ENCODE measurements at regions of chr4 and their contacts with region 1.

Region 1: GRCh38 chr4:52869196-52869595 is 7.1 kb downstream of the RASL11B start:
- DNase-seq: peak; percentile 80
- ATAC-seq: peak; percentile 43

Region 2: GRCh38 chr4:52712172-52712990 is 156.8 kb before region 1 on chr4:
- intact Hi-C with region 1: loop called (anchors 5 kb)
- DNase-seq: peak; percentile 98
- ATAC-seq: peak; percentile 99

Region 3: GRCh38 chr4:52750819-52751486 is 118.2 kb before region 1 on chr4 and contains the start of gene ERVMER34-1:
- intact Hi-C with region 1: loop called (anchors 2 kb)
- DNase-seq: peak; percentile 75
- ATAC-seq: peak; percentile 67
- total RNA-seq, gene ERVMER34-1: 5.3 TPM

Region 4: GRCh38 chr4:52911684-52912294 is 42.6 kb after region 1 on chr4:
- intact Hi-C with region 1: loop called (anchors 5 kb)
- DNase-seq: no peak
- ATAC-seq: no peak

Region 5: DNA sequence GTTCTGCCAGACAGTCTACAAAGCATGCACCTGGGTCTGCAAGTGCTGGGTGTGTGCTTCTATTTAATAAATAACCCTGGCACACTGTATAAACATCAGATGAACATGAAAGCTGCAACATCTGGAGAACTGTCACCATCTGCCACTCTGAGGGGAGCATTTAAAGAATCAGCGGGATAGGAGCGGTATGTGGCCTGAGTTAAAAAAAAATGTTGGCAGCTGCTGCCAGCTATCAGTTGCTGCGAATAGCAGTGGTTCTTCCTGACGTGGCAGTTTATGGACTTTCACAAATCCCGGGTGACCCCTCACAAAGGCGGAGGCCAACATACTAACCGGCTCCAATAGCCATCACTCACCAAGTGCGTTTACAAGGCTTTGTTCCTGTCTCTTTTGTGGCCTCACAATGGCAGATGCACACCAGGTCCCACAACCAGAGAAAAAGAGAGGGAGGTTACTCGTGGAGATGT is 88.1 kb after region 1 on chr4:
- intact Hi-C with region 1: loop called (anchors 5 kb)
- DNase-seq: no peak
- ATAC-seq: peak; percentile 66